ENCODE measurements at regions of chr6 and their contacts with region 1.

Region 1: DNA sequence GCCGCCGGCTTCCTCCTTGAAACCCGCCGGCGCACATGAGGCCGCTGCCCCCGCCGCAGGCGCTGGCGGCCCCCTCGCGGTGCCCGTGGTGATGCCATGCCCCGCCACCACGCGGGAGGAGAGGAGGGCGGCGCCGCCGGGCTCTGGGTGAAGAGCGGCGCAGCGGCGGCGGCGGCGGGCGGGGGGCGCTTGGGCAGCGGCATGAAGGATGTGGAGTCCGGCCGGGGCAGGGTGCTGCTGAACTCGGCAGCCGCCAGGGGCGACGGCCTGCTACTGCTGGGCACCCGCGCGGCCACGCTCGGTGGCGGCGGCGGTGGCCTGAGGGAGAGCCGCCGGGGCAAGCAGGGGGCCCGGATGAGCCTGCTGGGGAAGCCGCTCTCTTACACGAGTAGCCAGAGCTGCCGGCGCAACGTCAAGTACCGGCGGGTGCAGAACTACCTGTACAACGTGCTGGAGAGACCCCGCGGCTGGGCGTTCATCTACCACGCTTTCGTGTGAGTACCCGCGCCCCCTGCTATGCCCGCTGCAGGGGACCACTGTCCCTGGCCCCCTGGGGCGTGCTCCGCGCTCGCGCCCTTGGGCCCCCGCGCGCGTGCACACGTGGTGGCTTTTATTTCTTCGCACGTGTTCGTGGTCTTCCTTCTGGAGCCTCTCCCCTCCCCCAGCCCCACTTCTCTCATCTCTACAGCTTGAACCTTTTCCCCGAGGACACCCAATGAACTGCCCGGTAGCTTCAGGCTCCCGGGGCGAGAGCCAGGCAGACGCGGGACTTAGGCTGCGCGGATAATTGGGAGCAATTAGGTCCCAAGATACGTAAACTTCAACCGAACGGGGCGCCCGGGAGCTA is 453 bp downstream of the KCNQ5 start:
- DNase-seq: peak; percentile 65
- H3K4me3 Mint-ChIP-seq: peak overlapping the region; percentile 87
- H3K27ac Mint-ChIP-seq: peak overlapping the region; percentile 87
- H3K4me1 Mint-ChIP-seq: peaks cover 61% of the 10 kb centered on the region
- H3K27me3 Mint-ChIP-seq: peaks cover 2% of the 10 kb centered on the region

Region 2: GRCh38 chr6:72411872-72412708 is 210.2 kb before region 1 on chr6:
- CTCF ChIA-PET with region 1: interaction called, 5 read pairs
- POLR2A ChIA-PET with region 1: no interaction called
- intact Hi-C with region 1: loop called (anchors 2 kb)
- DNase-seq: peak; percentile 85
- H3K4me3 Mint-ChIP-seq: no peak overlapping the region
- H3K27ac Mint-ChIP-seq: no peak overlapping the region
- H3K4me1 Mint-ChIP-seq: no peaks in the 10 kb centered on the region
- H3K27me3 Mint-ChIP-seq: no peaks in the 10 kb centered on the region

Region 3: DNA sequence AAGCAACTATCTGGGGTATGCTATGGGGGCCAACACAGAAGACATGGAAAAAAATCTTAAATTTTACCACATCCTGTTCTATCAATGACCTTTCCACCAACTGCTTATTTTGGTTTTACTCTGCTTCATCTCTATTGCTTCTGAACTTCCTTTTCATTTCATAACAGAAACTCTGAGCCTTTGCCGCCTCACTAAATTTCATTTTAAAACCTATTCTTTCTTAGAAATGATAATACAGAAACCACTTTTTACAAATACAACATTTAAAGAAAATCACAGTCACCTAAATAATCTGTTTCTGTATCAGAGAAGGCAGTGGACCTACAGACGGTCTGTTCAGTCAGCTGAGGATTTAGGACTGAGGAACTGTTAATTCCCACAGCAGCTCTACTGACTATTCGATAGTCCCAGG is 117.1 kb after region 1 on chr6:
- CTCF ChIA-PET with region 1: no interaction called
- POLR2A ChIA-PET with region 1: no interaction called
- intact Hi-C with region 1: loop called (anchors 2 kb)
- DNase-seq: no peak
- H3K4me3 Mint-ChIP-seq: no peak overlapping the region
- H3K27ac Mint-ChIP-seq: no peak overlapping the region
- H3K4me1 Mint-ChIP-seq: peaks cover 28% of the 10 kb centered on the region
- H3K27me3 Mint-ChIP-seq: no peaks in the 10 kb centered on the region

Region 4: GRCh38 chr6:72894091-72894490 is 271.8 kb after region 1 on chr6:
- CTCF ChIA-PET with region 1: no interaction called
- POLR2A ChIA-PET with region 1: no interaction called
- intact Hi-C with region 1: no loop called
- DNase-seq: no peak
- H3K4me3 Mint-ChIP-seq: no peak overlapping the region
- H3K27ac Mint-ChIP-seq: no peak overlapping the region
- H3K4me1 Mint-ChIP-seq: no peaks in the 10 kb centered on the region
- H3K27me3 Mint-ChIP-seq: no peaks in the 10 kb centered on the region

Region 5: DNA sequence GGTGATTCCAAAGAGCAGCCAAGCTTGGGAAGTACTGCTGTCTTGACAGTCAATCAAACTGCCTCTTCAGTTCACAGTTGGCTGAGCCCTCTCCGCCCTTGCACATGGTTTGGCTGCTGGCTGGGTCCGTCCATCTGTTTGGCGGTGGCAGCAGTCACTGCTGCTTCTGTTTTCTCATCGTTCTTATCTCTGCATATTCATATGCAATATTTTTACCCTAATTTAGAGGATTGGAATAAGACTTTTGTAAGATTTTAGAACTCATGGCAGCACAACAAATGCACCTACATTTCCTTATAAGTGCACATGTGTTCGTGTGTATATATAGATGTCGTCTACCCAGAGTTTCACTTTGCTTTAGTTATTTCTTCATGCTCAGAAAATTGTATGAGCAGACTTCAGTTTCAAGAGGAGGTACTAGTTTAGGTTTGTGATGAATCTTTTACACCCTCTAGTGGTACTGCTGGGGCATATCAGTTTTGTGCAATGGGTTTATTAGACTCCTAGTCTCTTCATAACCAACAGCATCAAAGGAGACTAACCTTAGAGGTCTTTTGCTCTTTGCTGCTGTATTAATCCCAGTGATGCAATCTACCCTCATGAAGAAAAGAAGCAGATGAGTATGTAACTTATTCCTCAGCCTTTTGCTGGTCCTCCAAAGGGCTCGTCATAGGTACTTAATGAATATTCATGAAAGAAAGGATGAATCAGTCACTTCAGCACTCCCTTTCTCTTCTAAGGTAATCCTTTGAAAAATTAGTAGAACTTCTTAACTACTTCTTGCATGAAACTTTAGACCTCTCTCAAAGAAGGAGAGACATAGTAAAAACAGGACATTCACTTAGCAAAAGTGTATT is 558.7 kb after region 1 on chr6:
- CTCF ChIA-PET with region 1: interaction called, 11 read pairs
- POLR2A ChIA-PET with region 1: no interaction called
- intact Hi-C with region 1: loop called (anchors 1 kb)
- DNase-seq: no peak
- H3K4me3 Mint-ChIP-seq: no peak overlapping the region
- H3K27ac Mint-ChIP-seq: no peak overlapping the region
- H3K4me1 Mint-ChIP-seq: no peaks in the 10 kb centered on the region
- H3K27me3 Mint-ChIP-seq: no peaks in the 10 kb centered on the region

Region 6: GRCh38 chr6:73388800-73389512 is 766.6 kb after region 1 on chr6:
- CTCF ChIA-PET with region 1: no interaction called
- POLR2A ChIA-PET with region 1: no interaction called
- intact Hi-C with region 1: loop called (anchors 5 kb)
- DNase-seq: peak; percentile 78
- H3K4me3 Mint-ChIP-seq: peak overlapping the region; percentile 83
- H3K27ac Mint-ChIP-seq: peak overlapping the region; percentile 69
- H3K4me1 Mint-ChIP-seq: peaks cover 17% of the 10 kb centered on the region
- H3K27me3 Mint-ChIP-seq: no peaks in the 10 kb centered on the region

Region 7: GRCh38 chr6:73580247-73581149 is 958.2 kb after region 1 on chr6:
- CTCF ChIA-PET with region 1: no interaction called
- POLR2A ChIA-PET with region 1: no interaction called
- intact Hi-C with region 1: loop called (anchors 10 kb)
- DNase-seq: peak; percentile 92
- H3K4me3 Mint-ChIP-seq: peak overlapping the region; percentile 73
- H3K27ac Mint-ChIP-seq: peak overlapping the region; percentile 97
- H3K4me1 Mint-ChIP-seq: peaks cover 27% of the 10 kb centered on the region
- H3K27me3 Mint-ChIP-seq: peaks cover under 1% of the 10 kb centered on the region